Posterior vena cava (tissue), 2 donors: ENCODE measurements at regions of chr5 and their contacts with region 1.

Region 1: GRCh38 chr5:120886351-120886860 is 422.3 kb downstream of the PRR16 start:
- DNase-seq: no peak

Region 2: GRCh38 chr5:121949867-121950266 is 1063.5 kb after region 1 on chr5:
- intact Hi-C with region 1: no loop called
- DNase-seq: no peak

Region 3: DNA sequence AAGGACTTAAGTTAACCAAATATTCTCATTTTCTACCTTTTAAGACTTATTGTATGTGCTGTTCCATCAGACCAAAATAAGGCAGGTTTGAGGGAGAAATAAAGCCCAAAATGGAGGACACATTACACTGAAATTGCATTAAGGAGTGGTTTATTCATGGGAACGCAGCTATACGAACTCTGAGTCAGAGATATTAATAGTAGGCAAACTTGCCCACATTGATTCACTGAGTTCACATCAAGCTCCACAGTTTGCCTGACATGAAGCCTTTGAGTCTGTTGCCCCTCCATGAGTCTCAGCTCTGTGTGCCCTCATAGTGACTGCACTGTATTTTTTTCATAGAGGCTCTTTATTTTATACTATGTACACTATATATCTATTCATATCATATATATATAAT is 1753.5 kb after region 1 on chr5:
- intact Hi-C with region 1: loop called in 1 of 2 experiments (anchors 5 kb)
- DNase-seq: no peak